Caco-2 (cell line): ENCODE measurements at regions of chr3 and their contacts with region 1.

Region 1: GRCh38 chr3:15268033-15268631 is 62.1 kb downstream of the CAPN7 start:
- DNase-seq: peak; percentile 76 to 85
- H3K4me3 ChIP-seq: no peak overlapping the region
- H3K4me3 Mint-ChIP-seq: no peak overlapping the region
- H3K27ac Mint-ChIP-seq: no peak overlapping the region
- H3K4me1 ChIP-seq: 0 out of 2 replicates have a peak, but pooled peaks cover 4% of the 10 kb centered on the region
- H3K4me1 Mint-ChIP-seq: peaks cover 7% of the 10 kb centered on the region
- H3K27me3 ChIP-seq: no peaks in the 10 kb centered on the region
- H3K27me3 Mint-ChIP-seq: no peaks in the 10 kb centered on the region
- CTCF ChIP-seq: peak; percentile 79 to 94

Region 2: GRCh38 chr3:15300323-15301078 is 32.4 kb after region 1 on chr3:
- CTCF ChIA-PET with region 1: interaction called, 5 read pairs
- POLR2A ChIA-PET with region 1: no interaction called
- intact Hi-C with region 1: loop called (anchors 1 kb)
- DNase-seq: no peak
- H3K4me3 ChIP-seq: no peak overlapping the region
- H3K4me3 Mint-ChIP-seq: no peak overlapping the region
- H3K27ac Mint-ChIP-seq: no peak overlapping the region
- H3K4me1 ChIP-seq: peaks cover 14% of the 10 kb centered on the region
- H3K4me1 Mint-ChIP-seq: peaks cover 12% of the 10 kb centered on the region
- H3K27me3 ChIP-seq: no peaks in the 10 kb centered on the region
- H3K27me3 Mint-ChIP-seq: no peaks in the 10 kb centered on the region
- CTCF ChIP-seq: no peak

Region 3: DNA sequence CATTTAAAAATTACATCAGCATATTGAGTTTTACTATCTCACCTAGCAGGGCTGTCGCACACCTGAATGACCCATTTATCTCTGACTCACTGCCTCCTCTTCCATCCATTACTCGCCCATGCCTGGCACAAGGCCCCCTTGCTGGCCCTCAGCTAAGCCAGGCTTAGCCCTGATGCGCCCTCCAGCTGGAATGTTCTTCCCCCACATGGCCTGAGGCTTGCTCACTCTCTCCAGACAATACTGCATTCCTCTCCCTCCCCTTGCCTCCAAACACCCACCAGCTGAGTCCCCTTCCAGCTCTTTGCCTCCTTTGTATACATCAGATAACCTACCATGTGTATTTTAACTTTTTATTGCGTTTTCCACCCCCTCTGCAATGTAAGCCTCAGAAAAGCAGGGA is 57.1 kb after region 1 on chr3:
- CTCF ChIA-PET with region 1: interaction called, 10 read pairs
- POLR2A ChIA-PET with region 1: no interaction called
- intact Hi-C with region 1: no loop called
- DNase-seq: peak; percentile 69 to 76
- H3K4me3 ChIP-seq: no peak overlapping the region
- H3K4me3 Mint-ChIP-seq: peak overlapping the region; percentile 21
- H3K27ac Mint-ChIP-seq: peak overlapping the region; percentile 79
- H3K4me1 ChIP-seq: peaks cover 35% of the 10 kb centered on the region
- H3K4me1 Mint-ChIP-seq: peaks cover 23% of the 10 kb centered on the region
- H3K27me3 ChIP-seq: no peaks in the 10 kb centered on the region
- H3K27me3 Mint-ChIP-seq: no peaks in the 10 kb centered on the region
- CTCF ChIP-seq: no peak

Region 4: GRCh38 chr3:15377961-15378791 is 110.0 kb after region 1 on chr3:
- CTCF ChIA-PET with region 1: interaction called, 11 read pairs
- POLR2A ChIA-PET with region 1: no interaction called
- intact Hi-C with region 1: loop called (anchors 1 kb)
- DNase-seq: peak; percentile 92 to 93
- H3K4me3 ChIP-seq: no peak overlapping the region
- H3K4me3 Mint-ChIP-seq: peak overlapping the region; percentile 19
- H3K27ac Mint-ChIP-seq: peak overlapping the region; percentile 57
- H3K4me1 ChIP-seq: 0 out of 2 replicates have a peak, but pooled peaks cover 5% of the 10 kb centered on the region
- H3K4me1 Mint-ChIP-seq: peaks cover 6% of the 10 kb centered on the region
- H3K27me3 ChIP-seq: no peaks in the 10 kb centered on the region
- H3K27me3 Mint-ChIP-seq: no peaks in the 10 kb centered on the region
- CTCF ChIP-seq: peak; percentile 76 to 81

Region 5: DNA sequence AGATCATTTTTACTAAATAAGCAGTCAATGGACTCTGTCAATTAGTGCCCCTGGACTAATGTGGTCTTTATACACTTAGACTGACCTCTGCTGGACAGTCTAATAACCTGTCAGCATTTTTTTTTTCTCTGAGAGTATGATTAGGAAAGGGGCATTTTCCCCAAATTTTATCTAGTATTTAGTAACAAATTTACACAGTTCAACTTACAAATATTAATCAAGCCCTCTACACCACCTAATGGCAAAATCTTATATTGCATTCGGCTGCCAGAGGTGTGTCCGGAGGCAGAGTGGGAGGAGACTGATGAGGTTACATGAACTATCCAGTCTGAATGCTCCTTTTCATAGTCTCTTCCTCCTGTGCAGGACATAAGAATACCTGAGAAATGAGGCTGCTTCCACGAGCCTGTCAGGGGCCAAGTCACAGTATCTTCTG is 289.4 kb after region 1 on chr3:
- CTCF ChIA-PET with region 1: no interaction called
- POLR2A ChIA-PET with region 1: no interaction called
- intact Hi-C with region 1: loop called (anchors 1 kb)
- DNase-seq: peak; percentile 71 to 73
- H3K4me3 ChIP-seq: no peak overlapping the region
- H3K4me3 Mint-ChIP-seq: no peak overlapping the region
- H3K27ac Mint-ChIP-seq: no peak overlapping the region
- H3K4me1 ChIP-seq: 0 out of 2 replicates have a peak, but pooled peaks cover 4% of the 10 kb centered on the region
- H3K4me1 Mint-ChIP-seq: peaks cover under 1% of the 10 kb centered on the region
- H3K27me3 ChIP-seq: no peaks in the 10 kb centered on the region
- H3K27me3 Mint-ChIP-seq: no peaks in the 10 kb centered on the region
- CTCF ChIP-seq: peak; percentile 22 to 54